Aorta (tissue), 5 donors: ENCODE measurements at regions of chr4 and their contacts with region 1.

Region 1: GRCh38 chr4:167021545-167022155 is 212.6 kb downstream of the SPOCK3 start:
- DNase-seq: peak; percentile 64 to 85
- ATAC-seq: no peak
- H3K4me3 ChIP-seq: no peak overlapping the region
- H3K27ac ChIP-seq: no peak overlapping the region
- H3K4me1 ChIP-seq: no peaks in the 10 kb centered on the region
- H3K27me3 ChIP-seq: no peaks in the 10 kb centered on the region

Region 2: DNA sequence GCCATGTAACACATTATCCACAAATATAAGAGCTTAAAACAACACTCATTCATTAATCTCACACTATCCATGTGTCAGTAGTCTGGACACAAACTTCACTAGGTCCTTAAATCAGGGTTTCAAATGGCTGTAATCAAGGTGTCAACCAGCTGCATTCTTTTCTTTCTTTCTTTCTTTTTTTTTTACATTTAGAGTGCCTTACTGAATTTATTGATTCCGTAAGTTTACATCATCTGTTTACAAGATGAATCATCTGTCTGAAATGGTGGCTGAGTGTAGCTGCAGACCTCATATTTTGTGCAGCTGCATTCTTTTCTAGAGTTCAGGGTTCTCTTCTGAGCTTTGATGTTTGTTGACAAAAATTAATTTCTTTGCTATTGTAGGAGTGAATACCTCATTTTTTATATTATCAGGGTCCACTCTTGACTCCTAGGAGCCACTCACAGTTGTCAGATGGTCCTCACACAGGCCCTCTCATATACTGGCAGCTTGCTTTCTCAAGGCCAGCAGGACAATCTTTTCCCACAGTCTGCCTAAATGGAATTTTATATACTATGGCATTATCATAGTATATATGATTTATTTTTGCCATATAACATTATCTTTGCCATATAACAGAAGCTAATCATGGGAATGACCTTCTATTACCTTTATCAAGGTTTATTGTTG is 174.8 kb after region 1 on chr4:
- intact Hi-C with region 1: no loop called
- DNase-seq: no peak
- ATAC-seq: no peak
- H3K4me3 ChIP-seq: no peak overlapping the region
- H3K27ac ChIP-seq: no peak overlapping the region
- H3K4me1 ChIP-seq: no peaks in the 10 kb centered on the region
- H3K27me3 ChIP-seq: no peaks in the 10 kb centered on the region

Region 3: DNA sequence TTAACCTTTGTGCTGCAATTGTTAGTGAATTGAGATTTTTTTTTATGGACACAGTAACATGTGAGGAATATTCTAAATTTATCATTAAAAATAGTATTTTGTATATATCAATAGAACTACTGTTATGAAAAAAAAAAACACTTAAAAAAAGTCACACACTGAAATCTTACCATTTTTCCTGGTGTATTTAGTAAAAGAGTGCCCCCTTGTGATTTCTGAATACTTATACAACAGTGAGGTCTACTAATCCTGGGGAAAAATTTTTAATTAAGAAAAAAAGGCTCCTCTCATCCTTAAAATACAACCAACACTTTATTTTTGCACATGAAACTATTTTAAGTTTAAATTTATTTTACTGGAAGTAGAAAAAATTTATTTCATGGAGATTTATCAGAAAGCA is 269.0 kb after region 1 on chr4:
- intact Hi-C with region 1: loop called in 1 of 2 experiments (anchors 5 kb)
- DNase-seq: no peak
- ATAC-seq: no peak
- H3K4me3 ChIP-seq: no peak overlapping the region
- H3K27ac ChIP-seq: no peak overlapping the region
- H3K4me1 ChIP-seq: no peaks in the 10 kb centered on the region
- H3K27me3 ChIP-seq: peaks cover 0 to 1% of the 10 kb centered on the region in 2 donors

Region 4: GRCh38 chr4:168076989-168077725 is 1055.5 kb after region 1 on chr4:
- intact Hi-C with region 1: loop called in 1 of 2 experiments (anchors 10 kb)
- DNase-seq: peak in 1 of 2 donors; percentile 41
- ATAC-seq: no peak
- H3K4me3 ChIP-seq: no peak overlapping the region
- H3K27ac ChIP-seq: no peak overlapping the region
- H3K4me1 ChIP-seq: no peaks in the 10 kb centered on the region
- H3K27me3 ChIP-seq: no peaks in the 10 kb centered on the region